PC-3 (cell line): ENCODE measurements at regions of chr7 and their contacts with region 1.

Region 1: GRCh38 chr7:34321000-34321581 is 336.9 kb upstream of the NPSR1 start:
- DNase-seq: peak; percentile 74
- ATAC-seq: peak; percentile 98
- H3K4me3 ChIP-seq: peak overlapping the region; percentile 36; the same call in 1 of the 2 replicates
- H3K27ac ChIP-seq: no peak overlapping the region
- H3K4me1 ChIP-seq: peaks cover 6% of the 10 kb centered on the region
- H3K27me3 ChIP-seq: 0 out of 2 replicates have a peak, but pooled peaks cover 6% of the 10 kb centered on the region
- CTCF ChIP-seq: peak; percentile 94

Region 2: GRCh38 chr7:33965183-33965744 is 355.8 kb before region 1 on chr7:
- CTCF ChIA-PET with region 1: no interaction called
- POLR2A ChIA-PET with region 1: no interaction called
- intact Hi-C with region 1: no loop called
- DNase-seq: no peak
- ATAC-seq: no peak
- H3K4me3 ChIP-seq: no peak overlapping the region
- H3K27ac ChIP-seq: no peak overlapping the region
- H3K4me1 ChIP-seq: no peaks in the 10 kb centered on the region
- H3K27me3 ChIP-seq: peaks cover 15% of the 10 kb centered on the region; the same call in 1 of the 2 replicates
- CTCF ChIP-seq: no peak

Region 3: DNA sequence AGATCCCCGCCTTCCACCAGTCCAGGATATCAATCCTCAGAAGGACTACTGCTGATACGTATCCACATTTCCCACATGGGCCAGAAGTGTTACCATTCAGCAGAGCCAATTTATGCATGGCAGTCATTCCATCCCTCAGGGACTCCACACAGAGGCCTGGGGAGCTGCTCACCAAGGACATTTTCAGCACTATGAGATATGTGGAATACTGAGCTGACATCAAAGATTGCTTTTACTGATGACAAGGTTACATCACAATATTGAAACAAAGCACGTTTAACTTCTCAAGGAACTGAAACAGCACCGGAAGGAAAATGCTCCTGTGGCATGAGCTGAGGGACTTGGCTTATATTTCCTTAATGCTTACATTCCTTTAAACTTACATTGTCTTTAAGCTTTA is 80.7 kb before region 1 on chr7:
- CTCF ChIA-PET with region 1: no interaction called
- POLR2A ChIA-PET with region 1: no interaction called
- intact Hi-C with region 1: no loop called
- DNase-seq: no peak
- ATAC-seq: no peak
- H3K4me3 ChIP-seq: no peak overlapping the region
- H3K27ac ChIP-seq: no peak overlapping the region
- H3K4me1 ChIP-seq: no peaks in the 10 kb centered on the region
- H3K27me3 ChIP-seq: peaks cover 11% of the 10 kb centered on the region
- CTCF ChIP-seq: no peak

Region 4: DNA sequence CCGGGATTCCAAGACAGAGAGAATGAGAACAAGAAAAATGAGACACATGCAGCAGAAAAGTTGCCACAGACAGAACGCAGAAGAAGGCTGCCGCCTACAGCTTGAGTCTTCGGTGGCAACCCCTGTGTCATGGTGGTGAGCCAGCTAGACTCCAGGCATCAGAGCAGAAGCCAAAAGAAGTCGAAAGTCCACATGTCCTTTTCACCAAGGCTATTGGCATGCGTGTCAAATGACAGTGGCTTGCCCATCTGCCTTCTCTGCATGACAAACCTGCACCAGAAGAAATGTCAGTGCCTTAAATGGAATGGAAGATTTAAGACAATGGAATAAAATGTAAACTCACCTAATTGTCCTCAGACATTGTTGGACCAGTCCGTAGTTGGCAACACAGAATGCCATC is 243.0 kb after region 1 on chr7:
- CTCF ChIA-PET with region 1: no interaction called
- POLR2A ChIA-PET with region 1: no interaction called
- intact Hi-C with region 1: no loop called
- DNase-seq: no peak
- ATAC-seq: no peak
- H3K4me3 ChIP-seq: no peak overlapping the region
- H3K27ac ChIP-seq: no peak overlapping the region
- H3K4me1 ChIP-seq: no peaks in the 10 kb centered on the region
- H3K27me3 ChIP-seq: peaks cover 4% of the 10 kb centered on the region; the same call in 1 of the 2 replicates
- CTCF ChIP-seq: no peak

Region 5: GRCh38 chr7:34823640-34824258 is 502.7 kb after region 1 on chr7:
- CTCF ChIA-PET with region 1: no interaction called
- POLR2A ChIA-PET with region 1: no interaction called
- intact Hi-C with region 1: loop called (anchors 5 kb)
- DNase-seq: peak; percentile 67
- ATAC-seq: peak; percentile 72
- H3K4me3 ChIP-seq: no peak overlapping the region
- H3K27ac ChIP-seq: no peak overlapping the region
- H3K4me1 ChIP-seq: no peaks in the 10 kb centered on the region; the same call in 1 of the 2 replicates
- H3K27me3 ChIP-seq: no peaks in the 10 kb centered on the region
- CTCF ChIP-seq: peak; percentile 79